Sigmoid colon (tissue), 7 donors: ENCODE measurements at regions of chr3 and their contacts with region 1.

Region 1: GRCh38 chr3:186361762-186362536 is at the start of gene DGKG:
- DNase-seq: peak; percentile 82
- H3K4me3 ChIP-seq: peak within 1 kb of the TSS; percentile 46 to 63 (median 54)
- H3K27ac ChIP-seq: peak within 1 kb of the TSS; percentile 63 to 84 (median 72)
- H3K4me1 ChIP-seq: peaks cover 0 to 45% (median 26%) of the 10 kb centered on the region in 4 donors
- H3K27me3 ChIP-seq: no peaks in the 10 kb centered on the region
- CTCF ChIP-seq: no peak
- EP300 ChIP-seq: no peak
- POLR2A ChIP-seq: peak; percentile 52 to 78
- total RNA-seq, gene DGKG: 6.1 to 30.7 (median 10.2) TPM

Region 2: GRCh38 chr3:186013312-186013711 is 348.6 kb before region 1 on chr3:
- intact Hi-C with region 1: no loop called
- DNase-seq: no peak
- H3K4me3 ChIP-seq: no peak overlapping the region
- H3K27ac ChIP-seq: no peak overlapping the region
- H3K4me1 ChIP-seq: no peaks in the 10 kb centered on the region
- H3K27me3 ChIP-seq: no peaks in the 10 kb centered on the region
- CTCF ChIP-seq: no peak
- EP300 ChIP-seq: no peak
- POLR2A ChIP-seq: no peak

Region 3: DNA sequence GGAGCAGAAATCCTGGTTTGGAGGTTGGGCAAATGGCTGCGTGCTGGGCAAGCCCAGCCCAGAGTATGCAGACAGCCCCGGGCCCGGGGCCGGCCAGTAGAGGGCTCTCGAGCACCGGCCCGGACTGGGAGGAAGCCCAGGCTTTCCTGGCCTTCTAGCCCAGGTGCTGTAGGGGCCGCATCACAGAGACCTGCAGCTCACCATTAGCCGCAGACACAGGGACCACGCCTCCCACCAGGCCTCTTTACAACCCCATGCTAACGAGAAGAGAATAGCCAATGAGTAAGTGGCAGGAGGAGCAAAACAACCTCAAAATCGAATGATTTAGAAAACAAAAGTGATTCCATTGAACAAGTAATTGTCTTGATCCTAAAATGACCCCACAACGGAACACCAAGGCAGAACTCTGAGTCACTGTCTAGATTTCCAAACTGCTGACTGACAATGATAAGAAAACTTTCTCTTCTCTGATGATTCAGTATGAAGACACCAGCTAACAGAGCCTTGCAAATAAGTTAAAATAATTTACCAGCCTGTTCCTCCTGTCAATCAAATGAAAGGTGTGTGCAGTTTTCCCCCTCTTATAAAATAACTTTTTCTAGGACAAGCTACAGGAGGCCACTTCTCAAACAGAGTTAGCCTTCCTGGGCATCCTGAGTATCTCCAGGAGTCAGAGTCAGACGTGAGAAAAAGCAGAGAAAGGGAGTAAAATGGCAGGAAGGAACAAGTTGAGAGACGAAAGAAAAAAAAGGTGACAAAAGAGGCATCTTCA is 102.2 kb before region 1 on chr3:
- intact Hi-C with region 1: loop called (anchors 10 kb)
- DNase-seq: peak; percentile 78
- H3K4me3 ChIP-seq: no peak overlapping the region
- H3K27ac ChIP-seq: peak overlapping the region in 1 of 4 donors; percentile 68
- H3K4me1 ChIP-seq: peaks cover 0 to 16% (median 7%) of the 10 kb centered on the region in 4 donors
- H3K27me3 ChIP-seq: no peaks in the 10 kb centered on the region
- CTCF ChIP-seq: peak; percentile 58 to 91 (median 73)
- EP300 ChIP-seq: no peak
- POLR2A ChIP-seq: no peak

Region 4: DNA sequence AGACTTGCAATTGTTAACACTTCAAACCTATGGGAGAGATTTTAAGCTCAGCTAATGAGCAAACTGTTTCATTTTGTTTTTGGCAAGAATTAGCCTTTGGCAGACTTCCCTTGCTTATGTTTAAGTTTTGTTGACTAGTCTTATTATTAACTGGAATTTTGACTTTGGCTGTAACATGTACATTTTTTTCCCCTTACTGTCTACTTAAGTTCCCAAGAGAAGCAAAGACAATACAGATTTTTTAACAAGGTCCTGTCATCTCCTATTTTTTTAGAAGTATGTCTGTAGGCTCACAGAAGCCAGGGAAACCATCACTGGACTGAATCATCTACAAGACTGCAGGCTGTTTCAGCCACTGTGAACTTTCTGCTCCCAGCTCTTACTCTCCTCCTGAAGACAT is 74.2 kb before region 1 on chr3:
- intact Hi-C with region 1: loop called (anchors 5 kb)
- DNase-seq: no peak
- H3K4me3 ChIP-seq: no peak overlapping the region
- H3K27ac ChIP-seq: peak overlapping the region in 3 of 4 donors; percentile 31 to 77 (median 32)
- H3K4me1 ChIP-seq: peaks cover 0 to 18% (median 17%) of the 10 kb centered on the region in 4 donors
- H3K27me3 ChIP-seq: no peaks in the 10 kb centered on the region
- CTCF ChIP-seq: no peak
- EP300 ChIP-seq: no peak
- POLR2A ChIP-seq: no peak

Region 5: GRCh38 chr3:186406669-186407635 is 45.0 kb after region 1 on chr3:
- intact Hi-C with region 1: loop called (anchors 5 kb)
- DNase-seq: peak; percentile 96
- H3K4me3 ChIP-seq: no peak overlapping the region
- H3K27ac ChIP-seq: peak overlapping the region; percentile 88 to 96 (median 90)
- H3K4me1 ChIP-seq: peaks cover 0 to 37% (median 33%) of the 10 kb centered on the region in 4 donors
- H3K27me3 ChIP-seq: no peaks in the 10 kb centered on the region
- CTCF ChIP-seq: no peak
- EP300 ChIP-seq: peak; percentile 78 to 87 (median 83)
- POLR2A ChIP-seq: no peak

Region 6: DNA sequence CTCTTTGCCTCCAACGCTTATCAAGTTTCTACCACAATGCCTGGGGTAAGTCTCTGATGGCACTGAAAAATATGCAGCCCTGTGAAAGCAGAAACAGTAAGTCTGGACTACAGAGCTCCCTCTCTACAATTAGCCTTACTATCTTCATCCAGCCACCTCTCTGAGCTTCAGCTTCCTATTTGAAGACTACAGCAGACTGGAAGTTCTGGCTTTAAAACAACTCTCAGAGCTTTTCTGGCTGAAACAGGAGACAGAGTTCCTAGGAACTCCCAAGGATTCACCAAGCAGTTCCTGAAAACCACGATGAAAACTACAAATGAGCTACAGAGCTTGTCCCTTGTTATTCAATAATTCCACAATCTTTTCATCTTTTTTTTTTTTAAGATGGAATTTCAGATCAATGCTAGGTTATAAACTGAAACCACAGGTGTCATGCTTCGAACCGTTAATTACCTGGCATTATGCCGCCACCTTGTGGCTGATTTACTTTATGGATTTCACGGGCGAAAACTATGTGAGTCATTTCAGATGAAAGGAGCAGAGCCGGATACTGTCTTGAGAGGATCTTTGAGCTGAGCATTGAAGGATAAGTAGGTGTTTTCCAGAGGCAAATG is 178.4 kb after region 1 on chr3:
- intact Hi-C with region 1: loop called (anchors 2 kb)
- DNase-seq: peak; percentile 82
- H3K4me3 ChIP-seq: peak overlapping the region in 2 of 4 donors; percentile 23 to 25
- H3K27ac ChIP-seq: peak overlapping the region in 1 of 4 donors; percentile 21
- H3K4me1 ChIP-seq: peaks cover 0 to 7% (median 4%) of the 10 kb centered on the region in 4 donors
- H3K27me3 ChIP-seq: no peaks in the 10 kb centered on the region
- CTCF ChIP-seq: peak; percentile 62 to 73 (median 66)
- EP300 ChIP-seq: no peak
- POLR2A ChIP-seq: no peak